Activated T-helper 1 cell treated with anti-CD3 and anti-CD28 coated beads, Interleukin-12 subunit alpha, Interleukin-12 subunit beta, Interleukin-2, Interleukin-4 antibody, amounts not matched to agents 30 ng/mL and 10 ng/mL and 1 ng/mL, durations not matched to agents 14 hours and 24 hours and 36 hours (primary cell): ENCODE measurements at regions of chr1 and their contacts with region 1.

Region 1: GRCh38 chr1:236142253-236143103 is at the start of gene GPR137B:
- DNase-seq: peak; percentile 39
- H3K4me3 Mint-ChIP-seq: peak within 1 kb of the TSS; percentile 91
- H3K27ac Mint-ChIP-seq: peak within 1 kb of the TSS; percentile 93
- H3K4me1 Mint-ChIP-seq: peaks cover 25% of the 10 kb centered on the region
- H3K27me3 Mint-ChIP-seq: peaks cover 42% of the 10 kb centered on the region
- total RNA-seq, gene GPR137B: 9.2 and 10.5 TPM in 2 replicates

Region 2: DNA sequence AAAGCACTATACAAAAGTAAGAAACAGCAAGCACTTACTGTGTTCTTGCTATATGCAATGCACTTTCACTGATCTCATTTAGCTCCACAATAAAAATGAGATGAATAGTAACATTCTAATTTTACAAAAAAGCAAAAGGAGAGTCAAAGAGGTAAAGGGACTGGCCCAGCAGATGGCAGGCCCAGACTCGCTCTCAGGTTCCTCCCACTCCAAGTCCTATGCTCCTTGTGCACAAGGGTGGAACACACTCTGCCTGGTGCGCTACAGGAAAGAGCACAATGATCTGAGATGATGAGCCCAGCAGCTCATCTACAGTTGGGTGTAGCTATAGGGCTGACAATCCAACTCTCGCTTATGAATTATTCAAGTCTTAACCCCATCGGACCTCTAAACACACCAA is 181.7 kb before region 1 on chr1:
- intact Hi-C with region 1: no loop called
- DNase-seq: no peak
- H3K4me3 Mint-ChIP-seq: no peak overlapping the region
- H3K27ac Mint-ChIP-seq: no peak overlapping the region
- H3K4me1 Mint-ChIP-seq: peaks cover 12% of the 10 kb centered on the region
- H3K27me3 Mint-ChIP-seq: peaks cover 29% of the 10 kb centered on the region

Region 3: DNA sequence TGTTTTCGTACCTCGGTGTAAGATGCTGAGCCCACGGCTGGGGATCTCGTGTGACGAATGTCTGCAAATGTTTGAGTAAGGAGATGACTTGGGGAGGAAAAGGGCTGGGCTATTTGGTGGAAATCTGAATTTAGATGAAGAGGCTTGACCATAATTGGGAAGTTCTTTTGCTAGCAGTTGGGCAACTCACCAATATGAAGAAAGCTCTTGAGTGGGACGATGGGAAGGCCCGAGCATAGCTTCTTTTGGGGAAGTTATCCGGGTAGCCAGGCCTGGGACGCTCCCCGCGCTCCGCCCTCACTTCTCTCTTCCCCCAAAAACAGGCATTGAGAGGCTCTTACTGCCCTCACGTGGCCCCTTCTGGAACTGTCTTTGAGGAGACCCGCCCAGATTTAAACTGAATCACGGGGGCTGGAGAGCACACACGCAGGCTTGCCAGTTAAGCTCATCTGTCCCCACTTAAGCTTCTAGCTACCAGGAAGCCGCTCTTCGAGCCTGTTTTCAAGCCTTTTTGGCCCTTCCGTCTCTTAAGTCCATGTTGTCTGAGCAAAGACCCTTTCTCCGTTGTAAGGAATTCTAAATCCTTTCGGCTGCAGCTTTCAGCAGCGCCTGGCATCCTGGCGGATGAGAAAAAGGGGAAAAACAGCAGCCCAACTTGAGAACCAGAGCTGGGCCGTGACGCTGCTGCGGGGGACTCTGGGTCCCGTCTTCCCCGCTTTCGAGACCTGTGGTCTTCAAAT is 170.7 kb before region 1 on chr1:
- intact Hi-C with region 1: no loop called
- DNase-seq: peak; percentile 80
- H3K4me3 Mint-ChIP-seq: peak overlapping the region; percentile 79
- H3K27ac Mint-ChIP-seq: peak overlapping the region; percentile 84
- H3K4me1 Mint-ChIP-seq: peaks cover 17% of the 10 kb centered on the region
- H3K27me3 Mint-ChIP-seq: peaks cover 11% of the 10 kb centered on the region

Region 4: GRCh38 chr1:236027104-236027503 is 115.4 kb before region 1 on chr1:
- intact Hi-C with region 1: no loop called
- DNase-seq: no peak
- H3K4me3 Mint-ChIP-seq: no peak overlapping the region
- H3K27ac Mint-ChIP-seq: no peak overlapping the region
- H3K4me1 Mint-ChIP-seq: peaks cover 5% of the 10 kb centered on the region
- H3K27me3 Mint-ChIP-seq: peaks cover 7% of the 10 kb centered on the region

Region 5: GRCh38 chr1:236103646-236104218 is 38.7 kb before region 1 on chr1:
- intact Hi-C with region 1: loop called (anchors 2 kb)
- DNase-seq: peak; percentile 38
- H3K4me3 Mint-ChIP-seq: no peak overlapping the region
- H3K27ac Mint-ChIP-seq: no peak overlapping the region
- H3K4me1 Mint-ChIP-seq: peaks cover 6% of the 10 kb centered on the region
- H3K27me3 Mint-ChIP-seq: peaks cover 3% of the 10 kb centered on the region

Region 6: DNA sequence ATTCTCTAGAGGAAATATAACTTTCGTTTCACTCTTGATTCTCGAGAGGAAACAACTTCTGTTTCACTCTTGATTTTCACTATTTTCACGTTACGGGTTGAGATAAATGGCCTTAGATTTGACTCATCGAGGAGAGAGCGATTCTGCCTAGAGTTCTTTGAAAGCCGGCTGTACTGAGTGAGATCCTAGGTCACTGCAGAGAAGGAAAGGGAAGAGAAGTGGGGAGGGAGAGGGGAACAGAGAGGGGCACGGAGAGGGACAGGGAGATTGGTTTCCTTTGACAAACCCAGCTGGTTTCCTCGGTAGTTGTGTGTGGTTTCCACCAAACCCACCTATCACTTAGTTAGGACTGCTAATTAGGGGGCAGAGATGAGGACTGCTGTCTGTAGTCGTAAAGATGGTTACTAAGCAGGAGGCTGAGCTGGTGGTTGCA is 21.7 kb before region 1 on chr1:
- intact Hi-C with region 1: loop called (anchors 1 kb)
- DNase-seq: no peak
- H3K4me3 Mint-ChIP-seq: peak overlapping the region; percentile 57
- H3K27ac Mint-ChIP-seq: peak overlapping the region; percentile 36
- H3K4me1 Mint-ChIP-seq: peaks cover 28% of the 10 kb centered on the region
- H3K27me3 Mint-ChIP-seq: peaks cover 15% of the 10 kb centered on the region

Region 7: GRCh38 chr1:236214761-236215160 is 72.3 kb after region 1 on chr1:
- intact Hi-C with region 1: loop called (anchors 5 kb)
- DNase-seq: no peak
- H3K4me3 Mint-ChIP-seq: no peak overlapping the region
- H3K27ac Mint-ChIP-seq: no peak overlapping the region
- H3K4me1 Mint-ChIP-seq: no peaks in the 10 kb centered on the region
- H3K27me3 Mint-ChIP-seq: no peaks in the 10 kb centered on the region

Region 8: GRCh38 chr1:236381565-236382158 is 239.2 kb after region 1 on chr1:
- intact Hi-C with region 1: no loop called
- DNase-seq: no peak
- H3K4me3 Mint-ChIP-seq: no peak overlapping the region
- H3K27ac Mint-ChIP-seq: no peak overlapping the region
- H3K4me1 Mint-ChIP-seq: no peaks in the 10 kb centered on the region
- H3K27me3 Mint-ChIP-seq: peaks cover 6% of the 10 kb centered on the region

Region 9: GRCh38 chr1:236416165-236416564 is 273.7 kb after region 1 on chr1:
- intact Hi-C with region 1: loop called (anchors 1 kb)
- DNase-seq: no peak
- H3K4me3 Mint-ChIP-seq: peak overlapping the region; percentile 39
- H3K27ac Mint-ChIP-seq: peak overlapping the region; percentile 83
- H3K4me1 Mint-ChIP-seq: peaks cover 10% of the 10 kb centered on the region
- H3K27me3 Mint-ChIP-seq: peaks cover 2% of the 10 kb centered on the region

Region 10: DNA sequence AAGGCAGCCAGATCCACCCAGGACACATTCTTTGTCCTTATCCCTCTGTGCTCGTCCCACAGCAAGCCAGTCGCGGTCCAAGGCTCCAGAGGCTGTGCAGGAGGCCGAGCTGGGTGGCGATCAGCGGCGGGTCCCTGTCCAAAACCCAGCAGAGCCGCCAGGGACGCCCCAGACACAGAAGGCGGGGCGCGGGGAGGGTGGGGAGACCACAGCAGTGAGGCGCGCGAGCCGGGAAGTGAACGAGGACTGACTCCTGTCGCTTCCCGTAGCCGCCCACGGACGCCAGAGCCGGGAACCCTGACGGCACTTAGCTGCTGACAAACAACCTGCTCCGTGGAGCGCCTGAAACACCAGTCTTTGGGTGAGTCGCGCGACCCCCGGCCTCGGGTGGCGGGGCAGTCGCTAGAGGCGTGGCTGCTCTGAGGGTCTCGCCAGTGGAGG is 381.2 kb after region 1 on chr1 and contains the start of gene LGALS8:
- intact Hi-C with region 1: loop called (anchors 2 kb)
- DNase-seq: peak; percentile 78
- H3K4me3 Mint-ChIP-seq: peak within 1 kb of the TSS; percentile 99
- H3K27ac Mint-ChIP-seq: peak within 1 kb of the TSS; percentile 100
- H3K4me1 Mint-ChIP-seq: peaks cover 36% of the 10 kb centered on the region
- H3K27me3 Mint-ChIP-seq: no peaks in the 10 kb centered on the region
- total RNA-seq, gene LGALS8: 56.6 and 66.2 TPM in 2 replicates